ENCODE measurements at regions of chr1 and their contacts with region 1.

Region 1: GRCh38 chr1:230268366-230269170 is 157.6 kb downstream of the PGBD5 start:
- DNase-seq: peak; percentile 41 to 76 (median 71)
- H3K4me3 ChIP-seq: no peak overlapping the region
- H3K27ac ChIP-seq: peak overlapping the region in 2 of 5 donors; percentile 4 to 35
- H3K4me1 ChIP-seq: peaks cover 0 to 24% of the 10 kb centered on the region in 2 donors
- H3K27me3 ChIP-seq: no peaks in the 10 kb centered on the region
- CTCF ChIP-seq: peak; percentile 65 to 97 (median 70)
- POLR2A ChIP-seq: no peak

Region 2: DNA sequence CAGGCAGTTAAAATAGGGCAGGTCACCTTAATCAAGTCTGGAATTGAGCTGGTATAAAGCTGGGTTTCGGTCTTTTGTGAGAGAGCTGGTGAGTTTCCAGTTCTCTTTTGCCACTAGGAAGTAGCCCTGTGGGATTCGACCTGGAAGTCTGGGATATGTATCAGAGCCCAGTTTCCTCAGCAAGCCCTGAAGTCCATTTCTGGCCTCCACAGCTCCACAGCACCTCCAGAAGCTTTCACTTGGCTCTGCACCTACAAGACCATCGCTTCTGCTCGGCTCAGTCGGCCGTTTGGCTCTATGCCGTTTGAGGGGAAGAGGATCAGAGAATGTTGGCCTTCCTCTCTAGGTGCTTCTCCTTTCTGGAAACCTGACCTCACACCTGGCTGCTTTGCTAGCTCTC is 53.5 kb before region 1 on chr1:
- intact Hi-C with region 1: loop called in 1 of 2 experiments (anchors 10 kb)
- DNase-seq: peak in 6 of 7 donors; percentile 40 to 79 (median 56)
- H3K4me3 ChIP-seq: no peak overlapping the region
- H3K27ac ChIP-seq: peak overlapping the region in 2 of 5 donors; percentile 8 to 31
- H3K4me1 ChIP-seq: peaks cover 6 to 40% of the 10 kb centered on the region in 2 donors
- H3K27me3 ChIP-seq: no peaks in the 10 kb centered on the region
- CTCF ChIP-seq: peak in 5 of 6 experiments; percentile 33 to 60 (median 38)
- POLR2A ChIP-seq: no peak

Region 3: GRCh38 chr1:230310381-230311163 is 42.0 kb after region 1 on chr1:
- intact Hi-C with region 1: no loop called
- DNase-seq: peak; percentile 73 to 92 (median 82)
- H3K4me3 ChIP-seq: no peak overlapping the region
- H3K27ac ChIP-seq: no peak overlapping the region
- H3K4me1 ChIP-seq: no peaks in the 10 kb centered on the region
- H3K27me3 ChIP-seq: no peaks in the 10 kb centered on the region
- CTCF ChIP-seq: peak; percentile 90 to 95 (median 92)
- POLR2A ChIP-seq: no peak

Region 4: DNA sequence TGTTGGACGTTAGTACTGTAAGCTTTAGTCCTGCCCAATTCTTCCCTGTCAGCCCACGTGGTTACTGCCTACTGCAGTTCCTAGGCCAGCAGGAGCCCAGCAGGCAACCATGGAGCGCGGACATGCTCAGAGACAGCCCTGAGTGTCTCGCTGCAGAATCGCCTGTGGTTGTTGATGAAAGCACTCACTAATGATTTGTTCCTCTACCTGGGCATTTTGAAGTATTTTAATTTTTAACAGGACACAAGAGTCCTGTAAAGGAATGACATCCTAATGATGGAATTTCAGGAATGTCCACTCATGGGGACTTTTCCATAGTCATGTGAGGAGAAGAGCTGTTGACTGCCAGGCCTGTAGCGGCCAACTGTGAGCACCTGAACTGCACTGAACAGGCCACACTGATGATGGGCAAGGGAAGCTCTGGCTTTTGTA is 113.5 kb after region 1 on chr1:
- intact Hi-C with region 1: no loop called
- DNase-seq: no peak
- H3K4me3 ChIP-seq: no peak overlapping the region
- H3K27ac ChIP-seq: no peak overlapping the region
- H3K4me1 ChIP-seq: no peaks in the 10 kb centered on the region
- H3K27me3 ChIP-seq: no peaks in the 10 kb centered on the region
- CTCF ChIP-seq: no peak
- POLR2A ChIP-seq: no peak

Region 5: GRCh38 chr1:231040019-231040799 is 771.6 kb after region 1 on chr1 and contains the start of gene FAM89A:
- intact Hi-C with region 1: no loop called
- DNase-seq: peak; percentile 56 to 81 (median 72)
- H3K4me3 ChIP-seq: peak within 1 kb of the TSS; percentile 27 to 99 (median 48)
- H3K27ac ChIP-seq: peak within 1 kb of the TSS in 3 of 5 donors; percentile 70 to 88 (median 74)
- H3K4me1 ChIP-seq: peaks cover 15 to 31% of the 10 kb centered on the region in 2 donors
- H3K27me3 ChIP-seq: no peaks in the 10 kb centered on the region
- CTCF ChIP-seq: no peak
- POLR2A ChIP-seq: peak in 1 of 2 donors; percentile 53
- total RNA-seq, gene FAM89A: 24.4 to 59.4 (median 36.6) TPM